ENCODE measurements at regions of chr16 and their contacts with region 1.

Region 1: GRCh38 chr16:28930652-28931051 is 1.1 kb upstream of the CD19 start:
- DNase-seq: peak; percentile 60
- ATAC-seq: peak; percentile 76
- H3K4me3 Mint-ChIP-seq: peak overlapping the region; percentile 99
- H3K27ac Mint-ChIP-seq: peak overlapping the region; percentile 98
- H3K4me1 Mint-ChIP-seq: peaks cover 75% of the 10 kb centered on the region
- H3K27me3 Mint-ChIP-seq: no peaks in the 10 kb centered on the region
- CTCF ChIP-seq: no peak

Region 2: GRCh38 chr16:28846080-28846932 is 84.3 kb before region 1 on chr16 and contains the start of gene TUFM:
- CTCF ChIA-PET with region 1: no interaction called
- POLR2A ChIA-PET with region 1: interaction called, 15 read pairs
- intact Hi-C with region 1: no loop called
- DNase-seq: peak; percentile 96
- ATAC-seq: peak; percentile 97
- H3K4me3 Mint-ChIP-seq: peak within 1 kb of the TSS; percentile 95
- H3K27ac Mint-ChIP-seq: peak within 1 kb of the TSS; percentile 90
- H3K4me1 Mint-ChIP-seq: peaks cover 28% of the 10 kb centered on the region
- H3K27me3 Mint-ChIP-seq: no peaks in the 10 kb centered on the region
- CTCF ChIP-seq: no peak
- total RNA-seq, gene TUFM: 189 and 206 TPM in 2 replicates

Region 3: GRCh38 chr16:28879841-28880588 is 50.6 kb before region 1 on chr16:
- CTCF ChIA-PET with region 1: no interaction called
- POLR2A ChIA-PET with region 1: interaction called, 18 read pairs
- intact Hi-C with region 1: loop called (anchors 2 kb)
- DNase-seq: peak; percentile 71
- ATAC-seq: peak; percentile 98
- H3K4me3 Mint-ChIP-seq: peak overlapping the region; percentile 89
- H3K27ac Mint-ChIP-seq: peak overlapping the region; percentile 59
- H3K4me1 Mint-ChIP-seq: peaks cover 14% of the 10 kb centered on the region
- H3K27me3 Mint-ChIP-seq: peaks cover 5% of the 10 kb centered on the region
- CTCF ChIP-seq: no peak

Measured in activated B cell treated with CpG ODN at 0.5 μM for 24 hours (primary cell).